Mammary epithelial cell (primary cell): ENCODE measurements at regions of chr4 and their contacts with region 1.

Region 1: GRCh38 chr4:124515591-124515990 is 196.9 kb downstream of the ANKRD50 start:
- DNase-seq: no peak
- H3K4me3 ChIP-seq: no peak overlapping the region
- H3K27ac ChIP-seq: no peak overlapping the region
- H3K4me1 ChIP-seq: no peaks in the 10 kb centered on the region
- H3K27me3 ChIP-seq: no peaks in the 10 kb centered on the region
- CTCF ChIP-seq: no peak

Region 2: GRCh38 chr4:124415146-124415545 is 100.4 kb before region 1 on chr4:
- CTCF ChIA-PET with region 1: no interaction called
- dilution Hi-C with region 1: no loop called
- in situ Hi-C with region 1: no loop called
- intact Hi-C with region 1: no loop called
- DNase-seq: no peak
- H3K4me3 ChIP-seq: no peak overlapping the region
- H3K27ac ChIP-seq: no peak overlapping the region
- H3K4me1 ChIP-seq: peaks cover 5% of the 10 kb centered on the region
- H3K27me3 ChIP-seq: no peaks in the 10 kb centered on the region
- CTCF ChIP-seq: no peak

Region 3: DNA sequence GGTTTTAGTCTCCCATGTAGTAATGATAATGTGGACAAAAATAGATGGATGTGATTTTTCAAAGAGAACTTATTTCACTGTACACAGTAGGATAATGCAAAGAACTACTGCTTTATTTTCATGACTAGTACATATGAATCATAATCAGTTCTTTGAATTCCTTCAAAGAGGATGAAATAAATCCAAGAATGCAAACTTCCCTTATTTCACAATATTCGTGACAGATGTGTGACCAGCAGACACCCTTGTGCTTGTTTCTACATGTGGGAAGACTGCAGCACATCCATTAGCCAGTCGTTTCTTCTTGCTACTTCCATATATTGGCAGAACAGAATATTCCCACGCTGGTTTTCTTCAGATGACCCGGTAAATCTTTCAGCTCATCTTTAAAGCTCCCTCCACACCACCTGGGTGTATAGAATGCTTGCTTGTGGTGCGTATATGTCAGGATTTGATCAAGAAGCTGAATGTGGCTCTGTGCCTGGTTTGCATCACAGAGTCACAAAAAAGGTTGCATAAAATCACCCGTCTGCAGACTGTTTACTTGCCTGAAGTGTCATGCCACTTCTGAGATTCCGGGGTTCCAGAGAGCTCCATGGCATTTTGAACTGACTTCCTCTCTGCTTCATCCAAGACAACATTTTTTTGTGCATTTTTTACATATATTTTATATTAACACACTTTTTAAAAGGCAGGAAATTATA is 751.5 kb after region 1 on chr4:
- CTCF ChIA-PET with region 1: no interaction called
- dilution Hi-C with region 1: no loop called
- in situ Hi-C with region 1: loop called in 1 of 2 experiments (anchors 25 kb)
- intact Hi-C with region 1: no loop called
- DNase-seq: peak; percentile 96
- H3K4me3 ChIP-seq: peak overlapping the region; percentile 21 to 30 (median 22)
- H3K27ac ChIP-seq: peak overlapping the region; percentile 59
- H3K4me1 ChIP-seq: peaks cover 11% of the 10 kb centered on the region
- H3K27me3 ChIP-seq: no peaks in the 10 kb centered on the region
- CTCF ChIP-seq: no peak